ENCODE measurements at regions of chr3 and their contacts with region 1.

Region 1: GRCh38 chr3:50708620-50709019 is 33.9 kb downstream of the DOCK3 start:
- DNase-seq: peak in 1 of 2 donors; percentile 16
- ATAC-seq: no peak
- H3K4me3 ChIP-seq: no peak overlapping the region
- H3K27ac ChIP-seq: no peak overlapping the region
- H3K4me1 ChIP-seq: peaks cover 0 to 10% (median 0%) of the 10 kb centered on the region in 9 donors
- H3K27me3 ChIP-seq: no peaks in the 10 kb centered on the region
- CTCF ChIP-seq: no peak

Region 2: GRCh38 chr3:49641921-49642707 is 1066.5 kb before region 1 on chr3:
- intact Hi-C with region 1: loop called in 1 of 10 experiments (anchors 5 kb)
- DNase-seq: no peak
- ATAC-seq: no peak
- H3K4me3 ChIP-seq: no peak overlapping the region
- H3K27ac ChIP-seq: no peak overlapping the region
- H3K4me1 ChIP-seq: peaks cover 0 to 15% (median 0%) of the 10 kb centered on the region in 9 donors
- H3K27me3 ChIP-seq: no peaks in the 10 kb centered on the region
- CTCF ChIP-seq: no peak

Region 3: GRCh38 chr3:50674349-50675178 is 34.1 kb before region 1 on chr3 and contains the start of gene DOCK3:
- intact Hi-C with region 1: no loop called
- DNase-seq: peak; percentile 23 to 69
- ATAC-seq: peak; percentile 77 to 93 (median 87)
- H3K4me3 ChIP-seq: peak within 1 kb of the TSS in 9 of 10 donors; percentile 39 to 57 (median 51)
- H3K27ac ChIP-seq: no peak within 1 kb of the TSS
- H3K4me1 ChIP-seq: peaks cover 0 to 16% (median 5%) of the 10 kb centered on the region in 9 donors
- H3K27me3 ChIP-seq: peaks cover 3 to 72% (median 56%) of the 10 kb centered on the region in 7 donors
- CTCF ChIP-seq: no peak
- total RNA-seq, gene DOCK3: 4.3 to 6.6 (median 4.7) TPM

Region 4: DNA sequence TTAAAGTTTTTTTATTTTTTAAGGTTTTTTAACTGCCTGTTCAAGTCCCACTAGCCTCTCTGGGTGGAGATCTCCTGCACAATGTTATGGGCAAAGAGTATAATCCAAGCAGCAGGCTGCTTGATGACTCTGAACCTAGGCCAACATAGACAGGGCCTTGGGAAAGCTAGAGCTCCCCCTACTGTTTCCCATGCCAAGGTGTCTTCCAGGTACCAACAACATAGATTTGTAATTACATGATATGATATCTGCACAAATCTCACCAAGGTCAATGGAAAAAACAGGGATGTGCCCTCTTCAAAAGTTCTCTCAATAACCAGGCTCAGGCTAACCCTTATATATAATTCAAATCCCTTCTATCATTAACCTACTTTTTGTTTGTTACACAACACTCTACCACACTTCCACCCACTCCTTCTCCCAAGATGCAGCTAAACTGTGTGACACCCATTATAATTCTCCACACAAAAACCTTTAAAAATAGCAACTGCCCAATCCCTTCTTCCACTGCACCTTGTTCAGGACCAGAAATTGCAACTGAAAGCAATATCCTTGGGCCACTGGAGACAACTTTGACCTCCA is 726.2 kb after region 1 on chr3:
- intact Hi-C with region 1: no loop called
- DNase-seq: peak in 1 of 2 donors; percentile 37
- ATAC-seq: peak in 7 of 8 donors; percentile 55 to 81 (median 70)
- H3K4me3 ChIP-seq: no peak overlapping the region
- H3K27ac ChIP-seq: no peak overlapping the region
- H3K4me1 ChIP-seq: peaks cover 0 to 6% (median 0%) of the 10 kb centered on the region in 9 donors
- H3K27me3 ChIP-seq: no peaks in the 10 kb centered on the region
- CTCF ChIP-seq: peak; percentile 46 to 82 (median 64)